ENCODE measurements at regions of chr2 and their contacts with region 1.

Region 1: GRCh38 chr2:95022309-95023221 is 2.9 kb upstream of the MAL start:
- DNase-seq: peak; percentile 67 to 90 (median 81)
- ATAC-seq: peak; percentile 79
- H3K4me3 ChIP-seq: no peak overlapping the region
- H3K4me3 Mint-ChIP-seq: peak overlapping the region; percentile 85
- H3K27ac ChIP-seq: no peak overlapping the region
- H3K27ac Mint-ChIP-seq: peak overlapping the region; percentile 88
- H3K4me1 ChIP-seq: peaks cover 35% of the 10 kb centered on the region
- H3K4me1 Mint-ChIP-seq: peaks cover 41% of the 10 kb centered on the region
- H3K27me3 ChIP-seq: peaks cover 0 to 5% of the 10 kb centered on the region in 2 experiments
- H3K27me3 Mint-ChIP-seq: no peaks in the 10 kb centered on the region
- CTCF ChIP-seq: peak; percentile 66

Region 2: DNA sequence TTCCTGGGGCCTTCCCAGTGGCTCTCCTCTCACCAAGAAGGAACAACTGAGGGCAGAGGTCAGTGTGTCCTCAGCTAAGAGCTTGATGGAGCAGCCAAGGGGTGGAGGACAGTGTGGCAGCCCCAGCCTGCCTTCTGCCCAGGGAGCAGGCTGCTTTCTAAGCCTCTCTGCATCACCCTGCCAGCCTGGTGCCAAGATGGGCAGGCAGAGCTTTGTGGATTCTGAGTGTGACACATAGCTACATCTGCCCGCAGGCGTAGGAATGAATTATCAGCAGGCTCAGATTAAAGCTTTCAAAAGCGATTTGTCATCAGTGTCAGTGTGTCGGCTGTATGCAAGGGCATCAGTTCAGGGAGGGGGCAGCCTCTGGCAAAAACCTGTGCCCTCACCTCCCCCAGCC is 11.7 kb after region 1 on chr2:
- CTCF ChIA-PET with region 1: interaction called, 15 read pairs
- POLR2A ChIA-PET with region 1: interaction called, 10 read pairs
- intact Hi-C with region 1: no loop called
- DNase-seq: no peak
- ATAC-seq: no peak
- H3K4me3 ChIP-seq: no peak overlapping the region
- H3K4me3 Mint-ChIP-seq: no peak overlapping the region
- H3K27ac ChIP-seq: no peak overlapping the region
- H3K27ac Mint-ChIP-seq: peak overlapping the region; percentile 49
- H3K4me1 ChIP-seq: peaks cover 92% of the 10 kb centered on the region
- H3K4me1 Mint-ChIP-seq: peaks cover 84% of the 10 kb centered on the region
- H3K27me3 ChIP-seq: no peaks in the 10 kb centered on the region
- H3K27me3 Mint-ChIP-seq: no peaks in the 10 kb centered on the region
- CTCF ChIP-seq: no peak

Region 3: DNA sequence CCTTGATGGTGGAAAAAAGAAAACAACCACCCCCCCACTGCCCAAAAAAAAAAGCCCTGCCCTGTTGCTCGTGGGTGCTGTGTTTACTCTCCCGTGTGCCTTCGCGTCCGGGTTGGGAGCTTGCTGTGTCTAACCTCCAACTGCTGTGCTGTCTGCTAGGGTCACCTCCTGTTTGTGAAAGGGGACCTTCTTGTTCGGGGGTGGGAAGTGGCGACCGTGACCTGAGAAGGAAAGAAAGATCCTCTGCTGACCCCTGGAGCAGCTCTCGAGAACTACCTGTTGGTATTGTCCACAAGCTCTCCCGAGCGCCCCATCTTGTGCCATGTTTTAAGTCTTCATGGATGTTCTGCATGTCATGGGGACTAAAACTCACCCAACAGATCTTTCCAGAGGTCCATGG is 31.0 kb after region 1 on chr2:
- CTCF ChIA-PET with region 1: interaction called, 62 read pairs
- POLR2A ChIA-PET with region 1: interaction called, 32 read pairs
- intact Hi-C with region 1: loop called (anchors 1 kb)
- DNase-seq: peak in 5 of 9 experiments; percentile 25 to 56 (median 30)
- ATAC-seq: peak; percentile 28
- H3K4me3 ChIP-seq: no peak overlapping the region
- H3K4me3 Mint-ChIP-seq: peak overlapping the region; percentile 60
- H3K27ac ChIP-seq: no peak overlapping the region
- H3K27ac Mint-ChIP-seq: peak overlapping the region; percentile 92
- H3K4me1 ChIP-seq: peaks cover 69% of the 10 kb centered on the region
- H3K4me1 Mint-ChIP-seq: peaks cover 66% of the 10 kb centered on the region
- H3K27me3 ChIP-seq: no peaks in the 10 kb centered on the region
- H3K27me3 Mint-ChIP-seq: no peaks in the 10 kb centered on the region
- CTCF ChIP-seq: no peak

Region 4: DNA sequence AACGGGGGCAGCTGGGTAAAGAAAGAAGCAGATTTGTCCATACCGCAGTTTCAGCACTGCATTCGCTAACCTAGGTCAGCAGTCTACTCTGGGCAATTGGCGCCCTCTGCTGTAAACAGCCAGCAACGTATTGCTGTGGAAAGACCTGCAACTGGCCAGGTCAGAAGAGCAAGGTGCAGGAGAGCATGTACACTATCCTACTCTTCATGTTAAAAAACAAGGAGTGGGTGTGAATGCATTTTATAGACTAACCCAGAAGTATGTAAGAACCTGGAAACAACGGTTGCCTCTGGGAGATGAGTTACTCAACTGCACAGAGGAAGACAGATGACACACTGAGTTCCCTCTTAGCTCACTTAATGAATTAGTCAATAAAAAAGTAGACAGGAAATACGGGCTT is 92.9 kb after region 1 on chr2:
- CTCF ChIA-PET with region 1: interaction called, 142 read pairs
- POLR2A ChIA-PET with region 1: interaction called, 15 read pairs
- intact Hi-C with region 1: loop called (anchors 1 kb)
- DNase-seq: peak; percentile 46 to 82 (median 76)
- ATAC-seq: peak; percentile 97
- H3K4me3 ChIP-seq: no peak overlapping the region
- H3K4me3 Mint-ChIP-seq: no peak overlapping the region
- H3K27ac ChIP-seq: no peak overlapping the region
- H3K27ac Mint-ChIP-seq: peak overlapping the region; percentile 28
- H3K4me1 ChIP-seq: peaks cover 28% of the 10 kb centered on the region
- H3K4me1 Mint-ChIP-seq: peaks cover 42% of the 10 kb centered on the region
- H3K27me3 ChIP-seq: no peaks in the 10 kb centered on the region
- H3K27me3 Mint-ChIP-seq: no peaks in the 10 kb centered on the region
- CTCF ChIP-seq: peak; percentile 90

Region 5: GRCh38 chr2:95165129-95166064 is 142.8 kb after region 1 on chr2 and contains the start of gene ZNF2:
- CTCF ChIA-PET with region 1: interaction called, 8 read pairs
- POLR2A ChIA-PET with region 1: interaction called, 8 read pairs
- intact Hi-C with region 1: loop called in 1 of 2 experiments (anchors 2 kb)
- DNase-seq: peak; percentile 91 to 99 (median 98)
- ATAC-seq: peak; percentile 94
- H3K4me3 ChIP-seq: peak within 1 kb of the TSS; percentile 98
- H3K4me3 Mint-ChIP-seq: peak within 1 kb of the TSS; percentile 99
- H3K27ac ChIP-seq: peak within 1 kb of the TSS; percentile 90 to 96
- H3K27ac Mint-ChIP-seq: peak within 1 kb of the TSS; percentile 96
- H3K4me1 ChIP-seq: peaks cover 18% of the 10 kb centered on the region
- H3K4me1 Mint-ChIP-seq: peaks cover 41% of the 10 kb centered on the region
- H3K27me3 ChIP-seq: no peaks in the 10 kb centered on the region
- H3K27me3 Mint-ChIP-seq: no peaks in the 10 kb centered on the region
- CTCF ChIP-seq: no peak
- total RNA-seq, gene ZNF2: 0.25 to 0.27 TPM

Measured in CD8-positive, alpha-beta T cell (primary cell).